Motor neuron (in vitro differentiated cells): ENCODE measurements at regions of chr6 and their contacts with region 1.

Region 1: GRCh38 chr6:110398778-110399177 is 16.6 kb downstream of the DDO start:
- ATAC-seq: peak in 3 of 8 experiments; percentile 23 to 41 (median 36)
- H3K4me3 ChIP-seq: no peak overlapping the region
- H3K27ac ChIP-seq: no peak overlapping the region
- H3K4me1 ChIP-seq: peaks cover 0 to 3% of the 10 kb centered on the region in 2 donors

Region 2: DNA sequence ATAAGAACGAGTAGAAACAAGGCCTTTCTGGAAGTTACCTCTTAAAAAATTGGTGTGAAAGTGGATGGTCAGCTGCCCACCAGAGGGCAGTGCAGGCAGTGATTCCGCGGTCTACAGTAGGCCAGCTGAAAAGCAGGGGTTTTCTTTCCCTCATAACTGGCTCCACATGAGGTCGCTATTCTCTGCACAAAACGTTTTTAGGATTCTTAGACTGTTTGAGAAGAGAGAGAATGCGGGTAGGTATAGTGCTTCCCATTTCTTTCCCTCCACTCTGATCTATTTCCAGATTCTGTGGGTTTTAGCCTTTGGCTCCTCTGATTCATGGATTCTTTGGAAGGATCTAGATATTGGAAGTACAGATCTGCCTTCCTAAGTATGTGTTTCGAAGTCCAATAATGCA is 693.5 kb before region 1 on chr6:
- in situ Hi-C with region 1: loop called in 7 of 9 experiments (anchors 25 kb)
- ATAC-seq: peak; percentile 95 to 100 (median 98)
- H3K4me3 ChIP-seq: no peak overlapping the region
- H3K27ac ChIP-seq: no peak overlapping the region
- H3K4me1 ChIP-seq: no peaks in the 10 kb centered on the region

Region 3: DNA sequence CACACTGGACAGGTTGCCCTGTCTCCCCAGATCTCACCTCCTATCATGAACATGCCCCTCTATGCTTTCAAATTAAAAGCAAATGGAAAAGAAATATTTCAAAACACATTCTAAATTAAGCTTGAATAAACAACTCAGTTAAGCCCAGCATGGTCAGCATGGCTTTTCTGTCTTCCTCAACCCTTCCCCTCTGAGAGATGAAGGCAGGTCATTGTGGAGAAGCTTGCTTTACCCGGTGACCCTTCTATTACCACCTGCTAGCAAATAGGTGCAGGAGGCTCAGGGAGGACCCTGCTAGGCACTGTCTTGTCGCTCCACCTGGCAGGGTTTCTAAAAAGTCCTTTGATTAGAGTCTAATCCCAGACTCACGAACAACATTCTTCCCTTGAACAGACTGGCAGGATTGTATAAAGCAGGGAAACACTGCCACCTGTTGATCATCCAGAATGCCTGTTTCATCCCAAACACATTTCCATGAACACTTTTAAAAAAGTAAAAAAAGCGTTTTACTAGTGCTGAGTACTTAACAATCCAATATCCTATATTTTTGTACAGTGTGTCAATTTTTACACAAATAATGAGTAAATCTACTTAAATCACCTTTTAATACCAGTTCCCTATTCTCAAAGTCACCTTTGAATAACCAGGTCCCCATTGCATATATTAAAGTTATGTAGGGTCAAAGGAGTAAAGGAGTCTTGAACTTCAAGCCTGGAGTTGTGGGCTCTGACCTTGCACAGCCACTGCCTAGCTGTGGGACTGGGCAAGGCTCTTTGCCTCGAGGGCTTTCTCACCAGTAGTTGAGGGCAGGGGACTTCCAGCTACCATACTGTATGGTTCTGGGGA is 345.2 kb before region 1 on chr6:
- in situ Hi-C with region 1: loop called in 4 of 9 experiments (anchors 25 kb)
- ATAC-seq: peak in 5 of 8 experiments; percentile 39 to 89 (median 84)
- H3K4me3 ChIP-seq: no peak overlapping the region
- H3K27ac ChIP-seq: no peak overlapping the region
- H3K4me1 ChIP-seq: peaks cover 0 to 2% of the 10 kb centered on the region in 2 donors